Natural killer cell (primary cell): ENCODE measurements at regions of chr6 and their contacts with region 1.

Region 1: GRCh38 chr6:57104336-57104735 is 14.3 kb downstream of the ZNF451 start:
- DNase-seq: no peak
- ATAC-seq: no peak
- H3K4me3 ChIP-seq: no peak overlapping the region
- H3K4me3 Mint-ChIP-seq: no peak overlapping the region
- H3K27ac ChIP-seq: no peak overlapping the region
- H3K27ac Mint-ChIP-seq: peak overlapping the region in 1 of 2 donors; percentile 26
- H3K4me1 ChIP-seq: no peaks in the 10 kb centered on the region
- H3K4me1 Mint-ChIP-seq: peaks cover 32 to 45% of the 10 kb centered on the region in 2 donors
- H3K27me3 ChIP-seq: no peaks in the 10 kb centered on the region
- H3K27me3 Mint-ChIP-seq: no peaks in the 10 kb centered on the region
- CTCF ChIP-seq: no peak

Region 2: DNA sequence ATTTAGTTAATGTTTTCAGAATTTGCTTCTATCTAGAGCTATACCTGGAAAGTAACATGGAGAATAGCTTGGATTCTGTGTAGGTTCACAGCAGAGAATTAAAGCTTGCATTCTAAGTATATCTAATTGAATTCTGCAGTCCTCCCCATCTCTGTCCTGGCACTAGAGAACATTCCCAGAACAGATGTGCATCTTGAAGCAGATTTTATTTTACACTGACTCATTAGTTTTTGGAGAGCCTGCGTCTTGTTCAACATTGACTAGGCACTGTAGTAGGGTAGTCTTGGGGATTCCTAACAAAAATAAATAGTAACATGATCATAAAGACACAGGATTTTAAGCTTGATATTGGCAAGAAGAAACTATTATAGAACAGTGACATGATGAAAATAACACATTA is 31.5 kb after region 1 on chr6:
- intact Hi-C with region 1: loop called (anchors 5 kb)
- DNase-seq: no peak
- ATAC-seq: no peak
- H3K4me3 ChIP-seq: no peak overlapping the region
- H3K4me3 Mint-ChIP-seq: no peak overlapping the region
- H3K27ac ChIP-seq: no peak overlapping the region
- H3K27ac Mint-ChIP-seq: peak overlapping the region in 1 of 2 donors; percentile 9
- H3K4me1 ChIP-seq: no peaks in the 10 kb centered on the region
- H3K4me1 Mint-ChIP-seq: peaks cover 12 to 22% of the 10 kb centered on the region in 2 donors
- H3K27me3 ChIP-seq: no peaks in the 10 kb centered on the region
- H3K27me3 Mint-ChIP-seq: no peaks in the 10 kb centered on the region
- CTCF ChIP-seq: no peak